Dorsolateral prefrontal cortex (tissue), 120 donors: ENCODE measurements at regions of chr11 and their contacts with region 1.

Region 1: DNA sequence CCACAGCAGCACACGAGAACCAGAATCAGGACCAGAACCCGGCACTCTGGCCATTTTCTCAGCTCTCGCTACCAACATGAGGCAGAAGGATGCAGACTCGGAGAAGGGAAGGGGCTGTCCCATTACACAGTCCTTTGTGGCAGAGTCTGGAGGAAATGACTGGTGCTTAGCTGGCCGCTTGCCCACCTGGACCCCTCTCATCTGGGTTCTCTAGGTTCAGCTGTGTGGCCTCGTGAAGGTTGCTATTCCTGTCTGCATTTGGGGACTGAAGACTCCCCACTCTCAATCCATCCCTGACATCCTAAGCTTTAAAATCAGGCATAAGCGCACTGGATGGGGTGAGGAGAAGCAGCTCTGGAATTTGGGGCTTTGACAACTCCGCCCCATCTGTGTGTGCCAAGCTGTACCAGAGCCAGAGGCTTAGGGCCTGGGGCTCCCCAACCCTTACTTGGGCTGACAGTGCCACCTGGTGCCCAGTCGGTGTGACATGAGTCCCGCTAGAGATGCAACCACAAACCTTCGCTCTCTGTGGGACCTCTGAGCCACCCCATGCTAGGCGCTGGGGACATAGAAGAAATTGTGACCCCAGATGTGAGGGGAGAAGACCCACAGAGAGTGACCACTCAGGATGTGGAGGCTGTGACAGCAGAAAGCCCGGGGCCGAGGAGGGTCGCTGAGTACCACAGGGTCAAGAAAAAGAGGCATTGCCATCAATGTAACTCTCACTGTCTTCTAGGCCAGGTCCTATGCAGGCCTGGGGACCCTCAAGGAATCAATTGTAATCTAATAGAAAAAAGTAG is 35.9 kb upstream of the FCHSD2 start:
- DNase-seq: peak; percentile 77 to 90 (median 82)
- H3K4me3 ChIP-seq: peak overlapping the region in 1 of 59 donors; percentile 4
- H3K27ac ChIP-seq: peak overlapping the region in 53 of 59 donors; percentile 2 to 87 (median 58)
- H3K27me3 ChIP-seq: no peaks in the 10 kb centered on the region
- CTCF ChIP-seq: peak; percentile 41 to 95 (median 86)

Region 2: DNA sequence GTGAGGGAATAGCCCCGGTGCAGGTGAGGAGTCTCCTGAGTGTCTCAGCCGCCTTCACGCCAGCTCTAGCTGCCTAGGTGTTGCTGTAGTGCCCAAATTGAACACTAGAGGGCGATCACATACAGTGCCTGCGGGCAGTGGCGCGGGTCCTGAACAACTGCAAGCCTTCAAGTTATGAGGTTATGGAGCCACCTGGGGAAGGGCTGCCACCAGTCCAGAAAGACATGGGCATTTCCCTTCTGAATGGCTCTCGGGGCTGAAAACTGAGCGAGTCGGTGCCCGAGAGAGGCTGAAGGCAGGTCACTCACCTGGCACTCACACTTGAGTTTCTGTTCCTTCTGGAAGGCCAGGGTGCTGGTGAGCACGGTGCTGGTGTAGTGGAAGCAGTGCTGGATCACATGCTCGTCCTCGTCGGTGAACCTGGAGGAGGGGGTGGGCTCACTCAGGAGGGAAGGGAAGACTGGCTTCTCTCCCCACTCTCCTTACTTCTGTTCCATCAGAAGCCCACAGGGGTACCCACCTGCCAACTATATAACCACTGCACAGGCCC is 592.1 kb before region 1 on chr11:
- intact Hi-C with region 1: loop called in 1 of 2 experiments (anchors 10 kb)
- DNase-seq: peak in 9 of 10 donors; percentile 54 to 76 (median 67)
- H3K4me3 ChIP-seq: no peak overlapping the region
- H3K27ac ChIP-seq: peak overlapping the region in 6 of 59 donors; percentile 8 to 45 (median 16)
- H3K27me3 ChIP-seq: peaks cover 0 to 15% (median 0%) of the 10 kb centered on the region in 45 donors
- CTCF ChIP-seq: peak; percentile 76 to 98 (median 94)

Region 3: GRCh38 chr11:72722050-72722748 is 455.8 kb before region 1 on chr11:
- intact Hi-C with region 1: loop called (anchors 5 to 10 kb)
- DNase-seq: peak; percentile 65 to 91 (median 86)
- H3K4me3 ChIP-seq: peak overlapping the region; percentile 12 to 75 (median 62)
- H3K27ac ChIP-seq: peak overlapping the region; percentile 29 to 91 (median 81)
- H3K27me3 ChIP-seq: no peaks in the 10 kb centered on the region
- CTCF ChIP-seq: peak in 6 of 56 donors; percentile 6 to 21 (median 12)

Region 4: GRCh38 chr11:72831513-72832300 is 346.3 kb before region 1 on chr11:
- intact Hi-C with region 1: loop called (anchors 1 to 2 kb)
- DNase-seq: peak; percentile 77 to 92 (median 89)
- H3K4me3 ChIP-seq: no peak overlapping the region
- H3K27ac ChIP-seq: peak overlapping the region in 51 of 59 donors; percentile 18 to 87 (median 68)
- H3K27me3 ChIP-seq: no peaks in the 10 kb centered on the region
- CTCF ChIP-seq: peak; percentile 60 to 98 (median 95)

Region 5: GRCh38 chr11:72930008-72930407 is 248.0 kb before region 1 on chr11:
- intact Hi-C with region 1: loop called in 1 of 2 experiments (anchors 5 kb)
- DNase-seq: no peak
- H3K4me3 ChIP-seq: no peak overlapping the region
- H3K27ac ChIP-seq: peak overlapping the region in 2 of 59 donors; percentile 22 to 30
- H3K27me3 ChIP-seq: no peaks in the 10 kb centered on the region
- CTCF ChIP-seq: no peak

Region 6: GRCh38 chr11:73147771-73148681 is 30.0 kb before region 1 on chr11:
- intact Hi-C with region 1: loop called in 1 of 2 experiments (anchors 2 kb)
- DNase-seq: peak in 7 of 10 donors; percentile 42 to 69 (median 66)
- H3K4me3 ChIP-seq: no peak overlapping the region
- H3K27ac ChIP-seq: peak overlapping the region in 15 of 59 donors; percentile 5 to 69 (median 40)
- H3K27me3 ChIP-seq: no peaks in the 10 kb centered on the region
- CTCF ChIP-seq: no peak

Region 7: GRCh38 chr11:73198677-73199076 is 20.7 kb after region 1 on chr11:
- intact Hi-C with region 1: no loop called
- DNase-seq: no peak
- H3K4me3 ChIP-seq: no peak overlapping the region
- H3K27ac ChIP-seq: no peak overlapping the region
- H3K27me3 ChIP-seq: peaks cover 0 to 5% (median 0%) of the 10 kb centered on the region in 45 donors
- CTCF ChIP-seq: no peak